A549 (cell line): ENCODE measurements at regions of chr6 and their contacts with region 1.

Region 1: DNA sequence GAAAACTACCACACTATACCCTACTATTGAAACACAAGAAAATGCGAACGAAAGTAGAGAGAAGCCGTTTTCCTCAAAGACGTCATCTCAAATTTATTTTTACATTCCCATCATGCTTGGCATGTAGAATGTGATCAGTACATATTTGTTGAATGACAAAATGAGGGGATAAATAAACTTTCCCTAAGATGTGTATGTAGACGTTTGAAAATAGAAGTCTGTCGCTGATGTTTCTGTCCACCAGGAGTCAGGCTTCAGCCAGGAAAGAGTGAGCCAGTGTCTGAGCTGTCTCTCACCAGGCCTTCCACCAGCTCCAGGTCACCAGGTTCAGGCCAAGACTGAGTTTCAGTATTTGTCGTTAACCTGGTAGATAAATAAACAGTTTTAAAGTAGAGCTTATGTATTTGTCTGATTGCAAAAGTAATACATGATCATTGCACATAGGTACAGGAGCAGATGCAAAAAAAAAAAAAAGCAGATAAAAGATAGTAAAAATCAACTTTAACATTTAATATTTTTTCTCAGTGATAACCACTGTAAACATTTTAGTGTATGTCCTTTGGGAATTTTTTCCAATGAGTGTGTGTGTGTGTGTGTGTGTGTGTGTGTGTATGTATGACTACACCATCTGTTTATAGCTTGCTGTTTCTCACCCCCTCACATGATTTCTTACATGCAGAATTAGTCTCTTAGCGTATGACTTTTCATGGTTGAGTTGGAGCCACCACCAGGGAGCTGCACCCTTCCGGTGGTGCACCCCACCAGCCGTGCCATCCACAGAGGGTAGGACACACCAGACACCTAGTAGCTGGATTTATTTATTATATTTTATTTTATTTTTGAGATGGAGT is 26.2 kb downstream of the WRNIP1 start:
- DNase-seq: peak; percentile 74 to 79
- ATAC-seq: peak; percentile 91 to 95; a peak in 5 of 6 replicates
- H3K4me3 ChIP-seq: no peak overlapping the region
- H3K27ac ChIP-seq: peak overlapping the region; percentile 46 to 72
- H3K4me1 ChIP-seq: peaks cover 18% of the 10 kb centered on the region
- CTCF ChIP-seq: peak; percentile 84
- EP300 ChIP-seq: no peak
- POLR2A ChIP-seq: no peak
- RAD21 ChIP-seq: peak; percentile 88 to 90

Region 2: DNA sequence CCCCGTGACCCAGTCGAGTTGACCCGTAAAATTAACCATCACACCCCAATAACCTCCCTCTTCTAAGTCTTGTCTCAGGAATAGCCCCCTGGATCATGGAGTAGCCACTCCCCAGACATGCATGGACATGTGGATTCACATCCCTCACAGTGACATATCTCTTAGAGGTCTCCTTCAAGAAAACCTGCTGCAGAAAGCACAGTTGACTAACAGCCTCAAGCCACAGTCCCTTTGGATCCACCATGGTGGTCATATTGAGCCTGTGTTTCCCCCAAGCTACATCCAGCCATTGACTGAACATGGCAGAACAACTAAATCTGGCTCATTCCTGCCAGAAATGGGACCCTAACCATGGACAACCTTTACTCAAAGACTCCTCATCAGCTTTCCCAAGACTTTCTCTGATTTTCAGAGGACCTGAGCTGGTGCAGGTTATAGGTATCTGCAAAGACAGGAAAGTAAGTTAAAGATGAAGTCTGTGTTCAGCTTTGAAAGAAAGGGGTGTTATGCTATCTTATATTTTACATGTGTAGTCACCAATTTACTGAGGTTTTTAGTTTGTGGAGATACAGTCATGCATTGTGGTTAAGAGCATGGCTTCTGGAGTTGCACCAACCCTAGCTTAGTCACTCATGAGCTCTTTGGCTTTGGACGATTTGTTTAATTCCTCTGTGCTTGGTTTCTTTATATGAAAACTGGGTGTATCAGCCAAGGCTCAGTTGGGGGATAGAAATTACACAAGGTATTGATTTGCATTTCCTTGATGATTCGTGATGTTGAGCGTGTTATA is 259.7 kb before region 1 on chr6:
- CTCF ChIA-PET with region 1: no interaction called
- POLR2A ChIA-PET with region 1: no interaction called
- DNase-seq: no peak
- ATAC-seq: no peak
- H3K4me3 ChIP-seq: no peak overlapping the region
- H3K27ac ChIP-seq: no peak overlapping the region
- H3K4me1 ChIP-seq: no peaks in the 10 kb centered on the region
- CTCF ChIP-seq: no peak
- EP300 ChIP-seq: no peak
- POLR2A ChIP-seq: no peak
- RAD21 ChIP-seq: no peak

Region 3: GRCh38 chr6:2764610-2765165 is 26.7 kb before region 1 on chr6:
- CTCF ChIA-PET with region 1: interaction called, 24 read pairs
- POLR2A ChIA-PET with region 1: interaction called, 5 read pairs
- DNase-seq: peak; percentile 47 to 69
- ATAC-seq: peak; percentile 86 to 93
- H3K4me3 ChIP-seq: peak overlapping the region; percentile 72
- H3K27ac ChIP-seq: peak overlapping the region; percentile 94 to 95
- H3K4me1 ChIP-seq: peaks cover 21% of the 10 kb centered on the region; the same call in 2 of the 3 replicates
- CTCF ChIP-seq: no peak
- EP300 ChIP-seq: no peak
- POLR2A ChIP-seq: peak; percentile 79
- RAD21 ChIP-seq: no peak

Region 4: GRCh38 chr6:2804516-2804915 is 13.2 kb after region 1 on chr6:
- CTCF ChIA-PET with region 1: interaction called, 23 read pairs
- POLR2A ChIA-PET with region 1: interaction called, 4 read pairs
- DNase-seq: no peak
- ATAC-seq: no peak
- H3K4me3 ChIP-seq: no peak overlapping the region
- H3K27ac ChIP-seq: no peak overlapping the region
- H3K4me1 ChIP-seq: no peaks in the 10 kb centered on the region
- CTCF ChIP-seq: no peak
- EP300 ChIP-seq: no peak
- POLR2A ChIP-seq: no peak
- RAD21 ChIP-seq: no peak

Region 5: GRCh38 chr6:2827142-2827541 is 35.8 kb after region 1 on chr6:
- CTCF ChIA-PET with region 1: interaction called, 10 read pairs
- POLR2A ChIA-PET with region 1: interaction called, 6 read pairs
- DNase-seq: no peak
- ATAC-seq: no peak
- H3K4me3 ChIP-seq: no peak overlapping the region
- H3K27ac ChIP-seq: no peak overlapping the region
- H3K4me1 ChIP-seq: peaks cover 11% of the 10 kb centered on the region
- CTCF ChIP-seq: no peak
- EP300 ChIP-seq: no peak
- POLR2A ChIP-seq: no peak
- RAD21 ChIP-seq: no peak

Region 6: GRCh38 chr6:2841264-2842138 is 50.2 kb after region 1 on chr6 and contains the start of gene SERPINB1:
- CTCF ChIA-PET with region 1: interaction called, 73 read pairs
- POLR2A ChIA-PET with region 1: interaction called, 24 read pairs
- DNase-seq: peak; percentile 47 to 90
- ATAC-seq: peak; percentile 74 to 81
- H3K4me3 ChIP-seq: peak within 1 kb of the TSS; percentile 71
- H3K27ac ChIP-seq: peak within 1 kb of the TSS; percentile 94 to 99
- H3K4me1 ChIP-seq: peaks cover 41% of the 10 kb centered on the region
- CTCF ChIP-seq: no peak
- EP300 ChIP-seq: no peak
- POLR2A ChIP-seq: peak; percentile 75
- RAD21 ChIP-seq: 0 out of 5 replicates have a peak, but pooled peaks of 1 of the 2 experiments have one; percentile 9
- polyA plus RNA-seq, gene SERPINB1: 98.6 and 135 TPM in 2 replicates

Region 7: DNA sequence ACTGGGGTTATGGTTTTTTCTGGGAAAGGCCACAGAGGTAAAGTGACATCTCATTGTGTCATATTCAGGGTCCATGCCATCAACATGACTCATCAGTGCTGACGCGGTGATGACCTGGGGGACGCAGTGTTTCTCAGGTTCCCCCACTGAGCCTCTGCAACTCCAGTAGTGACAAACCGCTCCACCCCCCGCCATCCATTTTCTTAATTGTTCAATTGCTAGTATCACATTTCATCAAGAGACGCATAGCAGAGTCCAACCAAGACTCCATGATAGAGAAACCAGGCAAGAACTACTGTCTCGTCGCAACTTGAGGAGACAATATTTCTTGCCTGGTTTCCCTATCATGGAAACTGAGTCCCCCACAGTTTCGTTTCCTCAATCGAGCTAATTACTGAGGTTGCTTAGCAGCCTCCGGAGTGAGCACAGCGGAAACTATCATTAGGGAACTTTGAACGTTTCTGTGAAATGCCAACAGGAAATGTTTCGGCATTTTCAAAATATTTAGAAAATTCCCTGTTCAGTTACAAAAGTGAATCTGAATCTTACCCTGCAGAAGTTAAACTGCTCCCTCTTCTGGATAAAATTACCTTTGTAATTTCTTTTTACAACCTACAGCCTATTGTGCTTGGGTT is 62.5 kb after region 1 on chr6:
- CTCF ChIA-PET with region 1: interaction called, 25 read pairs
- POLR2A ChIA-PET with region 1: no interaction called
- DNase-seq: peak in 1 of 2 experiments; percentile 80
- ATAC-seq: peak; percentile 45 to 68; a peak in 5 of 6 replicates
- H3K4me3 ChIP-seq: peak overlapping the region; percentile 39
- H3K27ac ChIP-seq: peak overlapping the region; percentile 84 to 94
- H3K4me1 ChIP-seq: peaks cover 62% of the 10 kb centered on the region
- CTCF ChIP-seq: peak; percentile 48
- EP300 ChIP-seq: 0 out of 5 replicates have a peak, but pooled peaks of 1 of the 2 experiments have one; percentile 25
- POLR2A ChIP-seq: no peak
- RAD21 ChIP-seq: peak in 1 of 2 experiments; percentile 41; a peak in 4 of 5 replicates

Region 8: DNA sequence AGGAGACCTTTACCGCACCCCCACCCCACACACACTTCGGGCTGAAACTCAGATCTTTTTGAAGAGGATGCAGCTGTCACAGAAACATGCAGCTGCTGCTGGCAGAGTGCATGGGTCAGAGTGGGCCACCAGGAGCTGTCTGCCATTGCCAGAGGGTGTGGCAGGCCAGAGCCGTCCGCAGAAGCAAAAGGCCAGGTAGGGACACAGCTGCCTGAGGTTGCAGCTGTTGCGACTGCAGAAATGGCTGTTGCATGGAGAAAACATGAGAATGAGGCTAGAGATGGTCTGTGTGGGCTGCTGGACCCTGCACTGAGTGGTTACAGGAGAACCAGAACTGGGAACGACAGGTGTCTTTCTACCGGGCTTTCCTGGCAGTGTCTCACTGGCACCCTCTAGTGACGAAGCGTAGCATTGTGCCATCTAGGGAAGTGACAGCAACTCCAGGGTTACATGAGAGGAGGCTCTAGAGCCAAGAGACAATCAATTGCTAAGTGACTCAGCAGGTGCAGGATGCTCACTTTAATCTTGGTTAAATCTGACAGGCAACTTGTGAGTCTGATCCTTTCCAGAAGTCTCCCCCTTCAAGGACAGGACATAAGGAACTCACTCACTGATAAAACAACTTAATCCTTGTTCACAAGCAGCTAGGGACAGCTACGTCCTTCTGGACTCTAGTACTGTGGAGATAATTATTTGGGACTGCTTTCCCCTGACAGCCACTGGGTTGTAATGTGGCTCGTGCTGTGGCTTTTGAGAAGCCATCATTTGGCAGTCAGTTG is 140.8 kb after region 1 on chr6:
- CTCF ChIA-PET with region 1: interaction called, 42 read pairs
- POLR2A ChIA-PET with region 1: no interaction called
- DNase-seq: peak; percentile 78 to 83
- ATAC-seq: peak; percentile 99
- H3K4me3 ChIP-seq: no peak overlapping the region
- H3K27ac ChIP-seq: peak overlapping the region; percentile 25 to 38; a peak in 3 of 6 replicates
- H3K4me1 ChIP-seq: peaks cover 7% of the 10 kb centered on the region; the same call in 2 of the 3 replicates
- CTCF ChIP-seq: peak; percentile 89
- EP300 ChIP-seq: no peak
- POLR2A ChIP-seq: no peak
- RAD21 ChIP-seq: peak; percentile 85 to 88